Thyroid gland (tissue), 4 donors: ENCODE measurements at regions of chr4 and their contacts with region 1.

Region 1: DNA sequence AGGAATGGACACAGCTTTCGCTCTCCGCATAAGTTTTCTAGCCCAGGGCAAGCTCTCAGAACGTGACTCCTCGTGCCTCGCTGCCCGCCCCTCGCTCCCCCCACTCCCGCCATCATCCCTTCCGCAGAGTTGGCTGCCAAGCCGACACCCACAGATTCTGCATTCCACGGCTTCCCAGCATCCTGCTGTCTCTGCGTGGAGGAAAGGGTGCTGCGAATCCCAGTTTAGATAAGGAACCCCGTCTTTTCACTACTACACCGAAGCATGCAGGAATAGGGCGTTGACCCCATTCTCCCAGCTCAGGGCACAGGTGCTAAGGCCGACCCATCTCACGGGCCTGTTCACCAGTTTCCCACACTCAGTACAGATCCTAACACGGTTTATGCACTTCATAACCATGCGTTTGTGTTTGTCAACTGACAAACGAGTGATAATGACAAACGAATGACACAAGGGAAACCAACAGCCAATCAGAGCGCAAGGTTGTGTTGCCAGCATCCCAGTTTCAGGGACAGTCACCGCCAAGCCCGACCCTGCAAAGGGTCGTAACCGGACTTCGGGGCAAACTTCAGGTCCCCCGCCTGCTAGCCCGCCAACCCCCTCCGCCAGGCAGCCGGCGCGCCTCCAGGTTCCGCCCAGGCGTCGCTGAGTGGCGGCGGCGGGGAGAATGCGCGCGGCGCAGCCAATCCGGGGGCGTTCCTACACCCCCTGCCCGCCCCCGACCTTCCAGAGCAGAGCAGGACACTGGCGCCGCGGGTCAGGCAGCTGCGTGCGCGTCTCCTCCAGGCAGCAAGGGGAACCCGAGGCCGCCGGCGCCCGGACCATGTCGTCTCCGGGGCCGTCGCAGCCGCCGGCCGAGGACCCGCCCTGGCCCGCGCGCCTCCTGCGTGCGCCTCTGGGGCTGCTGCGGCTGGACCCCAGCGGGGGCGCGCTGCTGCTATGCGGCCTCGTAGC is at the start of gene CYP2U1:
- DNase-seq: peak; percentile 84 to 86
- H3K4me3 ChIP-seq: peak within 1 kb of the TSS; percentile 42 to 79 (median 71)
- H3K27ac ChIP-seq: peak within 1 kb of the TSS; percentile 4 to 69 (median 60)
- H3K4me1 ChIP-seq: peaks cover 6 to 7% of the 10 kb centered on the region in 2 donors
- H3K27me3 ChIP-seq: no peaks in the 10 kb centered on the region
- CTCF ChIP-seq: peak in 2 of 6 experiments; percentile 30 to 31
- POLR2A ChIP-seq: peak in 1 of 2 donors; percentile 75
- total RNA-seq, gene CYP2U1: 7.0 to 13.4 (median 8.7) TPM

Region 2: GRCh38 chr4:107801766-107802211 is 129.3 kb before region 1 on chr4:
- intact Hi-C with region 1: no loop called
- DNase-seq: peak; percentile 64 to 66
- H3K4me3 ChIP-seq: no peak overlapping the region
- H3K27ac ChIP-seq: no peak overlapping the region
- H3K4me1 ChIP-seq: no peaks in the 10 kb centered on the region
- H3K27me3 ChIP-seq: no peaks in the 10 kb centered on the region
- CTCF ChIP-seq: no peak
- POLR2A ChIP-seq: no peak

Region 3: GRCh38 chr4:107989537-107990386 is 58.7 kb after region 1 on chr4 and contains the start of gene HADH:
- intact Hi-C with region 1: loop called (anchors 10 kb)
- DNase-seq: peak; percentile 95 to 96
- H3K4me3 ChIP-seq: peak within 1 kb of the TSS; percentile 56 to 84 (median 66)
- H3K27ac ChIP-seq: peak within 1 kb of the TSS; percentile 80 to 86 (median 86)
- H3K4me1 ChIP-seq: peaks cover 3 to 41% of the 10 kb centered on the region in 2 donors
- H3K27me3 ChIP-seq: no peaks in the 10 kb centered on the region
- CTCF ChIP-seq: no peak
- POLR2A ChIP-seq: peak in 1 of 2 donors; percentile 93
- total RNA-seq, gene HADH: 32.7 to 60.4 (median 50.9) TPM